ENCODE measurements at regions of chr4 and their contacts with region 1.

Region 1: DNA sequence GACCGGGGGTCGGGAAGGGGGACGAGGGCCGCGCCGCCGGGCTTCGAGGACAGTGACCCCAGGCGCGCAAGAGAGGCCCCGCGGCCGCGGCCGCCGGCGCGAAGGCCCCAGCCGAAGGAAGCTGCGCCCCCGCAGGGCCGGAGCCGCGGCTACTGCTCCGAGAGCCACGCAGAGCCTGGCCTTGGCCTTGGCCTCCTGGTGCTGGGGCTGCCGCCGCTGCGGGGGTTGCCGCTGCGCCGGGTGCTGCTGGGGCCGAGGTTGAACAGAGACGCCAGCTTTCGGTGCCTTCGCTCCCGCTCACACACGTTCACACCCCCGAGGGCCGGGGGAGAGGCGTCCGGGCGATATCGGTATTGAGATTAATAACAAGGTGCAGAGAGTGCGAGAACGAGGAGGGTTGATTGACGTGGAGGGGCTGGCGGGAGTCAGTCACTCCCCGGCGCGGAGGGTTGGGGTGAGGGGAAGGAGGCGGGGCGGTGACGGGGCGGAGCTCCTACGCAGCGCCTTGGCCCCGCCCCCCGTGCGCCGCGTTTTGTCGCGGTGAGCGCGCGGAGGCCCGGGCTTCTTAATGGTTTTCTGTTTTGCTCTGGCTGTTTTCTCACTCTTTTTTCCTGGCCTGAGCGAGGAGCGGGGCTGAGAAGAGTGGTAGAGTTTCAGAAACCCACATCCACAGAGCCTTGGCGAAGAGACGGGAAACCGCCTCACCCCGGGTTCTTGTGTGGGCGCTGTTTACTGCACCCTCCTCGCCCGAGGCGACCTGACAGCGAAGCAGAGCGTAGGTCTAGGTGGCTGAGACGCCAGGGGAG is 878 bp upstream of the CNOT6L start:
- DNase-seq: peak; percentile 93 to 98 (median 96)
- ATAC-seq: peak; percentile 75
- H3K4me3 ChIP-seq: peak overlapping the region; percentile 64 to 69
- H3K4me3 Mint-ChIP-seq: peak overlapping the region; percentile 99
- H3K27ac ChIP-seq: peak overlapping the region; percentile 96 to 98
- H3K27ac Mint-ChIP-seq: peak overlapping the region; percentile 100
- H3K4me1 ChIP-seq: peaks cover 44% of the 10 kb centered on the region
- H3K4me1 Mint-ChIP-seq: peaks cover 60% of the 10 kb centered on the region
- H3K27me3 ChIP-seq: no peaks in the 10 kb centered on the region
- H3K27me3 Mint-ChIP-seq: no peaks in the 10 kb centered on the region
- CTCF ChIP-seq: no peak

Region 2: DNA sequence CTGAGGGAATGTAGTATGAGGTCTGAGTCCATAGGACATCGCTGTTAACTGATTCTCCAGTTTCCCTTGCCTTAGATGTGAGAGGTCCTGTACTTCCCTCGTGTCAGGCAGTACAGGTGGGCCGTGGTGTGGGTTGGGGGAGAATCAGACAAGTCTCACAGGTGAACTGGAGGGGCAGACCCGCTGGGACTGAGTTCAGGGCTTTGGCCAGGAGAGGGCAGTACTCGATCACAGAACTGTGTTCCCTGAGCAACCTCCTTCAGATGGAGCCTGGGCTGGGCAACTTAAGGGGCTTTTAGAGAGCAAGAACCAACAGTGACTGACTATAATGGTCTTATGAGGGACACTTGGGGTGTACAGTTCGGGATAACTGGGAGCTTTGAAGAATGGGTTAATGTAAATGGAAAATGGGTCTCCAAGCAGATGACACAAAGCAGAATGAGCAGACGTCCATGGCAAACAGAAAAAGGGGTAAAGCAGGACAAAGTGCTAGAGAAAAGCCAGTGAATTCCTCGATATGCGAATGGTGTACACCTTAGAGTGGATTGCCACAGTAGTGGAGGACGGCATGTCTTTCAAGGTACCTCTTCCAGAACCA is 579.5 kb before region 1 on chr4:
- CTCF ChIA-PET with region 1: no interaction called
- POLR2A ChIA-PET with region 1: no interaction called
- intact Hi-C with region 1: no loop called
- DNase-seq: peak; percentile 7 to 63 (median 43)
- ATAC-seq: no peak
- H3K4me3 ChIP-seq: no peak overlapping the region
- H3K4me3 Mint-ChIP-seq: no peak overlapping the region
- H3K27ac ChIP-seq: no peak overlapping the region
- H3K27ac Mint-ChIP-seq: no peak overlapping the region
- H3K4me1 ChIP-seq: no peaks in the 10 kb centered on the region
- H3K4me1 Mint-ChIP-seq: no peaks in the 10 kb centered on the region
- H3K27me3 ChIP-seq: no peaks in the 10 kb centered on the region
- H3K27me3 Mint-ChIP-seq: peaks cover 5% of the 10 kb centered on the region
- CTCF ChIP-seq: peak; percentile 21

Region 3: DNA sequence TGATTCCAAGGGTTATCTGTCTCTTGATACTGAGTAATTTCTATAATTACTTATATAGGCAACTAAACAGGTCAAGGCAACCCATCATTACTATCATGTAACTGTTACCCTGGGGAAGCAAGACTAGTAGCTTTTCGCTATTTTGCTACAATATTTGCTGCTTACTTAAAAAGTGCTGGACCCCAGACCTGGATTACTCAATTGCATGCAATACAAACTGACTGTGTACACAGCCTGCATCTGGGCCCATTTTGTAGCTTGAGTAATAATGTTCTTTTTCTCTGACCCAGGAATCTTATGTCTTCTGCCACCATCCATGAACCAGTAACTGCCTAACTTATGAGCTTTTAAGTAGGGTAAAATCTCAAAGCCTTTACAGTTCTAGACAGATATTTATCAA is 54.3 kb before region 1 on chr4:
- CTCF ChIA-PET with region 1: no interaction called
- POLR2A ChIA-PET with region 1: interaction called, 3 read pairs
- intact Hi-C with region 1: loop called in 1 of 2 experiments (anchors 10 kb)
- DNase-seq: no peak
- ATAC-seq: no peak
- H3K4me3 ChIP-seq: no peak overlapping the region
- H3K4me3 Mint-ChIP-seq: no peak overlapping the region
- H3K27ac ChIP-seq: no peak overlapping the region
- H3K27ac Mint-ChIP-seq: peak overlapping the region; percentile 55
- H3K4me1 ChIP-seq: no peaks in the 10 kb centered on the region
- H3K4me1 Mint-ChIP-seq: peaks cover 53% of the 10 kb centered on the region
- H3K27me3 ChIP-seq: no peaks in the 10 kb centered on the region
- H3K27me3 Mint-ChIP-seq: no peaks in the 10 kb centered on the region
- CTCF ChIP-seq: no peak

Region 4: GRCh38 chr4:77800483-77801259 is 19.4 kb before region 1 on chr4:
- CTCF ChIA-PET with region 1: interaction called, 3 read pairs
- POLR2A ChIA-PET with region 1: interaction called, 20 read pairs
- intact Hi-C with region 1: loop called (anchors 2 kb)
- DNase-seq: no peak
- ATAC-seq: peak; percentile 10
- H3K4me3 ChIP-seq: peak overlapping the region; percentile 6 to 19
- H3K4me3 Mint-ChIP-seq: peak overlapping the region; percentile 72
- H3K27ac ChIP-seq: peak overlapping the region; percentile 2 to 71
- H3K27ac Mint-ChIP-seq: peak overlapping the region; percentile 78
- H3K4me1 ChIP-seq: peaks cover 73% of the 10 kb centered on the region
- H3K4me1 Mint-ChIP-seq: peaks cover 82% of the 10 kb centered on the region
- H3K27me3 ChIP-seq: no peaks in the 10 kb centered on the region
- H3K27me3 Mint-ChIP-seq: no peaks in the 10 kb centered on the region
- CTCF ChIP-seq: no peak

Region 5: GRCh38 chr4:77852892-77853495 is 32.9 kb after region 1 on chr4:
- CTCF ChIA-PET with region 1: interaction called, 22 read pairs
- POLR2A ChIA-PET with region 1: interaction called, 625 read pairs
- intact Hi-C with region 1: loop called (anchors 1 kb)
- DNase-seq: peak; percentile 39 to 94 (median 70)
- ATAC-seq: peak; percentile 84
- H3K4me3 ChIP-seq: peak overlapping the region; percentile 19 to 38
- H3K4me3 Mint-ChIP-seq: peak overlapping the region; percentile 71
- H3K27ac ChIP-seq: peak overlapping the region; percentile 88 to 97
- H3K27ac Mint-ChIP-seq: peak overlapping the region; percentile 99
- H3K4me1 ChIP-seq: peaks cover 59% of the 10 kb centered on the region
- H3K4me1 Mint-ChIP-seq: peaks cover 58% of the 10 kb centered on the region
- H3K27me3 ChIP-seq: no peaks in the 10 kb centered on the region
- H3K27me3 Mint-ChIP-seq: no peaks in the 10 kb centered on the region
- CTCF ChIP-seq: no peak

Region 6: DNA sequence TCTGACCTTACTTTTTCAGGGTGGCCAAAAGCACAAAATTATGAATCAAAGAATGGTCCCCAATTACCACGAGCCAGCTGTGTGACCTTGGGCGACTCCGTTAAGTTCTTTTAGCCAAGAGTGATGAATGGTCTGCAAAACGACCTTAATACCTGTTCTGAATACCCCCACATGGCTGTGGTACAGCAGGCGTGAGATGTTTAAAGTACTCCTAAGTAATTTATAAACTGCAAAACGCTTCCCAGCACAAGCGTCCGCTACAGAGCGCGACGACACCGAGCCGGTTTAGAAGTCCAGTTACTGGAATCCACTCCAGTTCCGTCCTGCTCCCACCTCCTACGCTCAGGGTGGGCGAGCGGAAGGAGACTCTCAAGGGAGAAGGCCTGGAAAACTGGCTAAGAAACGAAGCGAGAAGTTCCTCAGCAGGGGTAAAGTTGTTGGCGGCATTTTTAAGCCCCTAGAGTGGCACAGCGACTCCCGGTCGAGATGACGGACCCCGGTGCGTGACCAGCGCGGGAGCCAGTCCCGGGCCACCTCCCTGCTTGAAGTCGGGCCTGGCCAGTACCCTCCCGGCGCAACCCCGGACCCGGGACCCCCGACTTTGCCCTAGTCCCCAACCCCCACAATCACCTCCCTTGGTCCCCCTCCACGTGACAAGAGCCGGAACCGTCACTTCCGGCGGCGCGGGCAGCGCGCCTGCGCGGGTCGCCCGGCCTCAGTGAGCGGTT is 955.4 kb after region 1 on chr4:
- CTCF ChIA-PET with region 1: no interaction called
- POLR2A ChIA-PET with region 1: no interaction called
- intact Hi-C with region 1: loop called in 1 of 2 experiments (anchors 10 kb)
- DNase-seq: peak; percentile 75 to 93 (median 86)
- ATAC-seq: peak; percentile 57
- H3K4me3 ChIP-seq: peak overlapping the region; percentile 87
- H3K4me3 Mint-ChIP-seq: peak overlapping the region; percentile 92
- H3K27ac ChIP-seq: peak overlapping the region; percentile 82 to 87
- H3K27ac Mint-ChIP-seq: peak overlapping the region; percentile 94
- H3K4me1 ChIP-seq: peaks cover 17% of the 10 kb centered on the region
- H3K4me1 Mint-ChIP-seq: peaks cover 16% of the 10 kb centered on the region
- H3K27me3 ChIP-seq: no peaks in the 10 kb centered on the region
- H3K27me3 Mint-ChIP-seq: no peaks in the 10 kb centered on the region
- CTCF ChIP-seq: no peak